Activated T-helper 1 cell treated with anti-CD3 and anti-CD28 coated beads, Interleukin-12 subunit alpha, Interleukin-12 subunit beta, Interleukin-2, Interleukin-4 antibody, amounts not matched to agents 30 ng/mL and 10 ng/mL and 1 ng/mL, durations not matched to agents 14 hours and 24 hours and 36 hours (primary cell): ENCODE measurements at regions of chr7 and their contacts with region 1.

Region 1: GRCh38 chr7:604001-604883 is 84.6 kb upstream of the PDGFA start:
- DNase-seq: peak; percentile 89
- H3K4me3 Mint-ChIP-seq: peak overlapping the region; percentile 83
- H3K27ac Mint-ChIP-seq: peak overlapping the region; percentile 99
- H3K4me1 Mint-ChIP-seq: peaks cover 46% of the 10 kb centered on the region
- H3K27me3 Mint-ChIP-seq: no peaks in the 10 kb centered on the region

Region 2: GRCh38 chr7:518630-519483 is 85.4 kb before region 1 on chr7:
- intact Hi-C with region 1: loop called (anchors 5 kb)
- DNase-seq: peak; percentile 9
- H3K4me3 Mint-ChIP-seq: peak overlapping the region; percentile 86
- H3K27ac Mint-ChIP-seq: peak overlapping the region; percentile 76
- H3K4me1 Mint-ChIP-seq: peaks cover 3% of the 10 kb centered on the region
- H3K27me3 Mint-ChIP-seq: peaks cover 22% of the 10 kb centered on the region

Region 3: GRCh38 chr7:618539-619367 is 14.5 kb after region 1 on chr7:
- intact Hi-C with region 1: loop called (anchors 1 kb)
- DNase-seq: peak; percentile 71
- H3K4me3 Mint-ChIP-seq: peak overlapping the region; percentile 82
- H3K27ac Mint-ChIP-seq: peak overlapping the region; percentile 99
- H3K4me1 Mint-ChIP-seq: peaks cover 48% of the 10 kb centered on the region
- H3K27me3 Mint-ChIP-seq: no peaks in the 10 kb centered on the region

Region 4: DNA sequence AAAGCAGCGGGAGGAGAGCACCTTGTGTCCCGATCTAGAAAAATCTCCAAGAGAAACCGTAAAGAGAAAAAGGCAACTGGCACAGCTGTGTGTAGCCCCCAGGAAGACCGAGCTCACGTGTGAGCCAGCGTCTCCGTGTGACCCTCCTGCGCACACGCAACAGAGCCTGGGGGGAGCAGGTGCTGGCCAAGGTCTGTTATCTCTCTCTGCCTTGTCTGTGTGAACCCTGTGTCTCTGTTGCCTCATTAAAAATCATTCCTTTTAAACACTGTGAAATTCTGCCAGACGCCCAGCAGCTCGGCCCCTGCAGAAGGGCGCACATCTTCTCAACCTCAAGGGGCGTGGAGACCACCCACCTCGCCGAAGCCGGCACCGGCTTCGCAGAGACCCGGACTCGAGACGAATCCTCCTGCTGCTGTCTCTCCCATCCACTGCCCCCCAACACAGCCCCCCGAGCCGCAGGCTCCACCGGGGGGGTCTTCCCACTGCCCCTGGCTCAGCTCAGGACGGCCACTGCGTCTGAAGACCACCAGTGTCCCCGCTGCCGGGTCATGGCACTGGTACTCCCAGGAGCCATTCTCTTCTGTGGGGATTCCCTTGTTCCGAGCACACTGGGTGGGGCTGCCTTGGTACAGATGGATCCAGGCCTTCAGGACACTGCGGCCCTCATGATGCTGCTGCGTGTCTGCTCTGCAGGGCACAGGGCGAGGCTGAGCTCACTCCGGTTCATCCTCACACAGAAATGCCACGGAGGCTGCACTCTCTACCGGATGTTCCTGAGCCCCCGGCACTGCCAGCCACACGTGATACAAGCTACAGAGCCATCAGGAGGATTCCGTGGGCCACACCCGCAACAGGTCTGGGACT is 28.0 kb after region 1 on chr7:
- intact Hi-C with region 1: no loop called
- DNase-seq: no peak
- H3K4me3 Mint-ChIP-seq: no peak overlapping the region
- H3K27ac Mint-ChIP-seq: no peak overlapping the region
- H3K4me1 Mint-ChIP-seq: no peaks in the 10 kb centered on the region
- H3K27me3 Mint-ChIP-seq: no peaks in the 10 kb centered on the region

Region 5: DNA sequence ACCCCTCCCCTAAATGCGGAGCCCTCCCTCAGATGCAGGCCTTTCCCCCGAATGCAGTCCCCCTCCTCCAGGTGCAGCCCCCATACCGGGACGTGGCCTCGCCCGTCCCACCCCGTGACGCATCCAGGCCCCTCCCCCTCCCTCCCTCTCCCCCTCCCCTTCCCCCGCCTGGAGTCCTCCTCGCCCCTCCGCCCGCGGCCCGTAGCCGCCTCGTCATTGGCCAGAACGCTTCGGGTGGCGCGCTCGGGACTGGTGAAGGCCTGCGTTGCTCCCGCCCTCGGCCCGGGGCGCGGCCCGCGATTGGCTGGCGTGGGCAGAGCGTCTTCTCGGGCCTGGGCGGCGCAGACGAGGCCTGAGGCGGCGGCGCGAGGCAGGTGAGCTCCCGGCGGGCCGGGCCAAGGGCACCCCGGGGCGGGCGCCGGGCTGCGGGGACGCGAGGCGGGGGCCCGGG is 212.1 kb after region 1 on chr7:
- intact Hi-C with region 1: loop called (anchors 5 kb)
- DNase-seq: peak; percentile 96
- H3K4me3 Mint-ChIP-seq: no peak overlapping the region
- H3K27ac Mint-ChIP-seq: no peak overlapping the region
- H3K4me1 Mint-ChIP-seq: peaks cover 55% of the 10 kb centered on the region
- H3K27me3 Mint-ChIP-seq: peaks cover 19% of the 10 kb centered on the region